ENCODE measurements at regions of chr17 and their contacts with region 1.

Region 1: DNA sequence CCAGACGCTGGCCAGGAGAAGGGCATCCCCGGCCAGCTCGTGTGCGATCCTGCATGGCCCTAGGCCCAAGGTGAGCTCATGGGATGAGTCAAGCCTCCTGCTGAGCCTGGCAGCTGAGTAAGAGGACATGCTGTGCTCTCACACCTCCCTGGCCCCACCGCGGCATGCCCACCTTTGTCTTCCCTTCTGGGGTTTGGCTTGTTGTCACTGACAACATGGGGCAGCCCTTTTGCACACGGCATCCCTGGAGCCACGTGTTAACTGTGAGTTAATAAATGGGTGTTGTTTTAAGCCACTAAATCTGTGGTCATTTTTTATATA is 8.9 kb upstream of the TNS4 start:
- DNase-seq: no peak
- ATAC-seq: no peak
- H3K4me3 Mint-ChIP-seq: no peak overlapping the region
- H3K27ac Mint-ChIP-seq: no peak overlapping the region
- H3K4me1 Mint-ChIP-seq: peaks cover 13% of the 10 kb centered on the region
- H3K27me3 Mint-ChIP-seq: peaks cover 2% of the 10 kb centered on the region

Region 2: GRCh38 chr17:40333781-40334448 is 176.4 kb before region 1 on chr17:
- CTCF ChIA-PET with region 1: no interaction called
- POLR2A ChIA-PET with region 1: no interaction called
- intact Hi-C with region 1: no loop called
- DNase-seq: no peak
- ATAC-seq: no peak
- H3K4me3 Mint-ChIP-seq: no peak overlapping the region
- H3K27ac Mint-ChIP-seq: peak overlapping the region; percentile 47
- H3K4me1 Mint-ChIP-seq: peaks cover 75% of the 10 kb centered on the region
- H3K27me3 Mint-ChIP-seq: no peaks in the 10 kb centered on the region

Region 3: DNA sequence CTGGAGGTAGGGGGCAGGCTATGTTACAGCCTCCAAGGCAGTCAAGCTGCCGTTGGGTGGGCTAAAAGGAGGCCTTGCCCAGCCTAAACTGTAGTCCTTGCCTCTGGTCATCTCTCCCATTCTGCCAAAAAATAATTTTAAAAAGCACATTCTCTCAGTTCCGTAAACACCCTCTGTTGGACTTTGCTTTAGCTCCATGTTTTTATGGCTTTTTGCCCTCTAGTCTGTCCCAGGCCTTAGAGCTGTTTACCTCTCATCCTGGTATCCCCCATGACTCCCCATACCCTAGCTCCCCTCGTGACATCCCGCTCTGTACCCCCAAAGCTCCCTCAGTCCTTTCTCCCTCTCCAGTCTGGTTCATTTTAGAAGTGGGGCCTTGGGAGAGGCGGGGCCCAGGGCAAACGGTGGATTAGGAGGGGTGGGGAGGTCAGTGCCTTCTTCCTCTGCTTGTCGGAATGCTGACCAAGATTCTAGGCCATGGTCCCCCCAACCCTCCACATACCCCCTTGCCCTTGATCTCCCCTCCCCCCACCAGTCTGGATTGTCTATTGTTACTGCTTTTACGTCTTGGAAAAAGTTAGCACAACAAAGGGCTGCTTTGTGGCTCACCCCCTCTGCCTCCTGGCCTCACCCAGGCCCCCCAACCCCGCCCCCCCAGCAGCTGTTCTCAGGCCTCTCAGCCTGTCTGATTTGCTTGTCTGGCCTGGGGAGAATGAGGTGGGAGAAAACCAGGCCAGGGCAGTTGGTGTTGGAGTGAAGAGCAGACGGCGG is 164.1 kb before region 1 on chr17:
- CTCF ChIA-PET with region 1: no interaction called
- POLR2A ChIA-PET with region 1: no interaction called
- intact Hi-C with region 1: loop called in 1 of 2 experiments (anchors 1 kb)
- DNase-seq: no peak
- ATAC-seq: no peak
- H3K4me3 Mint-ChIP-seq: peak overlapping the region; percentile 39
- H3K27ac Mint-ChIP-seq: peak overlapping the region; percentile 11
- H3K4me1 Mint-ChIP-seq: peaks cover 51% of the 10 kb centered on the region
- H3K27me3 Mint-ChIP-seq: no peaks in the 10 kb centered on the region

Region 4: GRCh38 chr17:40457964-40458791 is 52.1 kb before region 1 on chr17:
- CTCF ChIA-PET with region 1: no interaction called
- POLR2A ChIA-PET with region 1: no interaction called
- intact Hi-C with region 1: no loop called
- DNase-seq: no peak
- ATAC-seq: no peak
- H3K4me3 Mint-ChIP-seq: no peak overlapping the region
- H3K27ac Mint-ChIP-seq: no peak overlapping the region
- H3K4me1 Mint-ChIP-seq: no peaks in the 10 kb centered on the region
- H3K27me3 Mint-ChIP-seq: no peaks in the 10 kb centered on the region

Region 5: DNA sequence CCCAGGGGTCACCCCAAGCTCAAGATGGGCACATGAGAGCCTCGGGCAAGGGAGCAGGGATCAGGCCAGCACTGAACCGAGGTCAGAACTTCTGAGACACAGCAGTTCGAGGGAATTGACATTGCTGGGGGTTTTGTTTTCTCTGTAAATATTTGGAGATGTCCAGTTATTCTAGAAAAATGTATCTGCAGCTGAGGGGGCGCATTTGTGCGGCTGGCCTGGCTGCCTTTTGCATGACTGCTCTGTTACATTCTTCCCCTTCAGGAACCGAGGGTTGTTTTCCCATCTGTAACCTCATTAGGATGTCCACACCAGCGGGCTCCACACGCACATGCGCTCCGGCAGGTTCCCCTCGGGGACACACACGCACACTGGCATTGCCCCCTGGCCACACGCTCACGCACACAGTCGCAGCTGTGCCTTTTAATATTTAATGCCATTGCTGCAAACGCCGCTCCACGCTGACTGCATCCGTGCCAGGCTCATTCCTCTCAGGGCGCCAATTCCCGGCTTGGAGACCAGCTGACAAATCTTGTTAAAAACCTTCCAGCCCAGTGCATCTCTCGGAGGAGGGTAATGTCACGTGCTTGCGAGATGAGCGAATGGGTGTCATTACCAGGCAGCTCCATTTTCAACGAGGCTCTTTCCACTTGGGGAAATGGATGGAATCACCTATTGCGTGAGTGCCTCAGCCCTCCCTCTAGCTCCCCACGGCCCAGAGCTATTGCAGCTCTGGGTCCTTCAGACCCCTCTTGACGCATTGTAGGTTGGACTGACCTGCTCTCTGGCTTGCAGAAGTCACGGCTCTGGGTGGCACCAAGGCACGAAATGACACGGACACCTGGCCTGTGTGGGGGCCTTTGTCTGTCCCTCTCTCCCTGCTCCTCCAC is 41.8 kb after region 1 on chr17:
- CTCF ChIA-PET with region 1: no interaction called
- POLR2A ChIA-PET with region 1: no interaction called
- intact Hi-C with region 1: no loop called
- DNase-seq: peak; percentile 67
- ATAC-seq: peak; percentile 14
- H3K4me3 Mint-ChIP-seq: peak overlapping the region; percentile 52
- H3K27ac Mint-ChIP-seq: peak overlapping the region; percentile 84
- H3K4me1 Mint-ChIP-seq: peaks cover 98% of the 10 kb centered on the region
- H3K27me3 Mint-ChIP-seq: no peaks in the 10 kb centered on the region

Measured in activated CD4-positive, alpha-beta T cell treated with anti-CD3 and anti-CD28 coated beads for 36 hours (primary cell).